CD4-positive, alpha-beta memory T cell (primary cell): ENCODE measurements at regions of chr17 and their contacts with region 1.

Region 1: GRCh38 chr17:57084802-57085447 is at the start of gene AKAP1:
- DNase-seq: peak; percentile 93 to 98 (median 98)
- H3K4me3 ChIP-seq: peak within 1 kb of the TSS; percentile 72 to 99
- H3K4me3 Mint-ChIP-seq: peak within 1 kb of the TSS; percentile 91 to 95 (median 92)
- H3K27ac ChIP-seq: peak within 1 kb of the TSS; percentile 83
- H3K27ac Mint-ChIP-seq: peak within 1 kb of the TSS; percentile 93 to 98 (median 95)
- H3K4me1 ChIP-seq: peaks cover 18% of the 10 kb centered on the region
- H3K4me1 Mint-ChIP-seq: peaks cover 22 to 35% (median 27%) of the 10 kb centered on the region in 4 donors
- H3K27me3 ChIP-seq: no peaks in the 10 kb centered on the region
- H3K27me3 Mint-ChIP-seq: no peaks in the 10 kb centered on the region
- total RNA-seq, gene AKAP1: 33.0 to 35.7 TPM

Region 2: DNA sequence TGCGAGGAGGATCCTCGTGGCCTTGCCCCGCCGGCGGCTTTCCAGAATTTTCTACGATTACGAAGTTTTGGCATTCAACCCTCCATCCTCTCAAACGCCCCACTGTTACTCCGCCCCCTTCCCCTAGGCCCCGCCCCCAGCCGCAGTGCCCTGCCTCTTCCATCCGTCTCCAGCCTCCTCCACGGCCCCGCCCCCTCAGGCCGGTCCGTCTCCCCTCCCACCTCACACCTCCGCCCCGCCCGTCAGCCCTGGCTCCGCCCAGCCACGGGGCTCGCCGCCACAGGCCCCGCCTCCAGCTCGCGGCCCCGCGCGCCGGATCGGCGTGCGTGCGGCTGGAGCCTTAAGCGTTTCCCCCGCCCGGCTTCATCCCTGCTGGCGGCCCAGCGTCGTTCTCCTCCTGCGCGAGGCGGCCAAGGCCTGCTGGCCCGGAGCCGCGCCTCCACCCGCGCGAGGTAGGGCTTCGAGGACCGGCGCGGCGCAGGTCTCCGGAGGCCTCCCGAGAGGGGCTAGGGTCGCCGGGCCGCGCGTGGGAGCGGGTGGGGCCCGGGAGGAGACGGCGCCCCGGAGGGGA is 251.0 kb before region 1 on chr17 and contains the starts of genes C17orf67 and DGKE:
- CTCF ChIA-PET with region 1: no interaction called
- POLR2A ChIA-PET with region 1: interaction called, 31 read pairs
- intact Hi-C with region 1: loop called (anchors 1 kb)
- DNase-seq: peak; percentile 98 to 99 (median 98)
- H3K4me3 ChIP-seq: peak within 1 kb of the TSS; percentile 49 to 88
- H3K4me3 Mint-ChIP-seq: peak within 1 kb of the TSS; percentile 95 to 98 (median 96)
- H3K27ac ChIP-seq: peak within 1 kb of the TSS; percentile 79
- H3K27ac Mint-ChIP-seq: peak within 1 kb of the TSS; percentile 92 to 97 (median 95)
- H3K4me1 ChIP-seq: peaks cover 67% of the 10 kb centered on the region
- H3K4me1 Mint-ChIP-seq: peaks cover 43 to 75% (median 57%) of the 10 kb centered on the region in 4 donors
- H3K27me3 ChIP-seq: no peaks in the 10 kb centered on the region
- H3K27me3 Mint-ChIP-seq: no peaks in the 10 kb centered on the region
- total RNA-seq, gene C17orf67: 9.5 to 11.2 TPM
- total RNA-seq, gene DGKE: 36.7 to 37.7 TPM

Region 3: DNA sequence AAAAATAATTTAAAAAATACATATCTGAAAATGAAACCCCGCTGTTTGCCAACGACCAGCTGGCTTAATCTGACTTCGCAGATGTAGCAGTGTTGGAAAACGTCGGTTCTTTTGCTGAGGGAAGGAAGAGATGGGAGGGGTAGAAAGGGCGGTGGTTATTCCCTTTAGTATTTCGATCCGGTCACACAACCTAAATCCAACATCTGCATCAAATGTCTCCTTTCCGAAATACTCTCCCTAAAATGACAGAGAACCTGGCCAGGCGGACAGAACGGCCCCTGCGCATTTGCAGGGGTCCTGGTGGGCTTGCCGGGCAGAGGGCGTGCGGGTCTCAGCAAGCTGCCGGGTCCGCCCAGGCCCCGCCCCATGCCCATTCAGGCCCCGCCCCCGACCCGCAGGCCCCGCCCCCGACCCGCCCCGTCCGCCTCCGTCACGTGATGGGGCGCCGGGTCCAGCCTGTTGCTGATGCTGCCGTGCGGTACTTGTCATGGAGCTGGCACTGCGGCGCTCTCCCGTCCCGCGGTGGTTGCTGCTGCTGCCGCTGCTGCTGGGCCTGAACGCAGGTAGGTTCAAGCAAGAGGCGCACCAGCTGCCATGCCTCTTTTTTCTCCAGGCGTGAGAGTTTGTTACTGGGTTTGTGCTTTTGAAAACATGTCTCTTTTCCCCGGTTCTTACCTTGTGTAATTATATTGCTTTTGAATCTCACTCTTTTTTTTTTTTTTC is 107.1 kb before region 1 on chr17 and contains the start of gene SCPEP1:
- CTCF ChIA-PET with region 1: no interaction called
- POLR2A ChIA-PET with region 1: interaction called, 4 read pairs
- intact Hi-C with region 1: loop called (anchors 5 kb)
- DNase-seq: peak; percentile 77 to 87 (median 80)
- H3K4me3 ChIP-seq: peak within 1 kb of the TSS; percentile 46 to 68
- H3K4me3 Mint-ChIP-seq: peak within 1 kb of the TSS; percentile 90 to 94 (median 91)
- H3K27ac ChIP-seq: peak within 1 kb of the TSS; percentile 32
- H3K27ac Mint-ChIP-seq: peak within 1 kb of the TSS; percentile 81 to 96 (median 90)
- H3K4me1 ChIP-seq: peaks cover 19% of the 10 kb centered on the region
- H3K4me1 Mint-ChIP-seq: peaks cover 11 to 28% (median 19%) of the 10 kb centered on the region in 4 donors
- H3K27me3 ChIP-seq: no peaks in the 10 kb centered on the region
- H3K27me3 Mint-ChIP-seq: peaks cover 1 to 4% of the 10 kb centered on the region in 2 donors
- total RNA-seq, gene SCPEP1: 16.3 to 19.4 TPM

Region 4: GRCh38 chr17:56994009-56994792 is 90.7 kb before region 1 on chr17:
- CTCF ChIA-PET with region 1: no interaction called
- POLR2A ChIA-PET with region 1: no interaction called
- intact Hi-C with region 1: no loop called
- DNase-seq: no peak
- H3K4me3 ChIP-seq: no peak overlapping the region
- H3K4me3 Mint-ChIP-seq: no peak overlapping the region
- H3K27ac ChIP-seq: no peak overlapping the region
- H3K27ac Mint-ChIP-seq: no peak overlapping the region
- H3K4me1 ChIP-seq: no peaks in the 10 kb centered on the region
- H3K4me1 Mint-ChIP-seq: no peaks in the 10 kb centered on the region
- H3K27me3 ChIP-seq: no peaks in the 10 kb centered on the region
- H3K27me3 Mint-ChIP-seq: no peaks in the 10 kb centered on the region

Region 5: DNA sequence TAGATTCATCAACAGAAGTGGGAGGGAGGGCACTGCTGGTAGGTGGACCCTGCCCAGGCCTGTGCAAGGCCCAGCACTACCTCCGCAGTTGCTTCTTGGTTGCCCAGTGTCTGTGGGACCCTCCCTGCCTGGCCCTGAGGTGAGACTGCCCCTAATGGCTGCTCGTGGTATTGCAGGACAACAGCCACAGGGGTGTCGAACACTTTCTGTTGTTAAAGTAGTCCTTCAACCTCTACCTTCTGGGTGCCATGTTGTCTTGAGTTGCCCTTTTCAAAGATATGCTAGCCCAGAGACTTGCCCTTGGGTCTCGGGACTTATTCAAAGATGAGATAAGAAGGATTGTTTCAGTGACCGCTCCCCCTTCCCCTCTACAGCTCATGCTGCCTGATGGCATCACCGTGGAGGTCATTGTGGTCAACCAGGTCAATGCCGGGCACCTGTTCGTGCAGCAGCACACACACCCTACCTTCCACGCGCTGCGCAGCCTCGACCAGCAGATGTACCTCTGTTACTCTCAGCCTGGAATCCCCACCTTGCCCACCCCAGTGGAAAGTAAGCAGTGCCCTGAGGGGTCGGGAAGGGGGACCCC is 29.3 kb after region 1 on chr17:
- CTCF ChIA-PET with region 1: interaction called, 3 read pairs
- POLR2A ChIA-PET with region 1: interaction called, 5 read pairs
- intact Hi-C with region 1: loop called (anchors 2 kb)
- DNase-seq: peak; percentile 31 to 50 (median 43)
- H3K4me3 ChIP-seq: no peak overlapping the region
- H3K4me3 Mint-ChIP-seq: no peak overlapping the region
- H3K27ac ChIP-seq: no peak overlapping the region
- H3K27ac Mint-ChIP-seq: peak overlapping the region in 2 of 7 donors; percentile 29 to 37
- H3K4me1 ChIP-seq: peaks cover 3% of the 10 kb centered on the region
- H3K4me1 Mint-ChIP-seq: peaks cover 0 to 1% (median 0%) of the 10 kb centered on the region in 4 donors
- H3K27me3 ChIP-seq: no peaks in the 10 kb centered on the region
- H3K27me3 Mint-ChIP-seq: no peaks in the 10 kb centered on the region

Region 6: GRCh38 chr17:57849874-57850754 is 765.2 kb after region 1 on chr17 and contains the start of gene MRPS23:
- CTCF ChIA-PET with region 1: no interaction called
- POLR2A ChIA-PET with region 1: interaction called, 7 read pairs
- intact Hi-C with region 1: loop called (anchors 1 kb)
- DNase-seq: peak; percentile 94 to 99 (median 97)
- H3K4me3 ChIP-seq: peak within 1 kb of the TSS; percentile 75 to 87
- H3K4me3 Mint-ChIP-seq: peak within 1 kb of the TSS; percentile 96 to 99 (median 98)
- H3K27ac ChIP-seq: peak within 1 kb of the TSS; percentile 92
- H3K27ac Mint-ChIP-seq: peak within 1 kb of the TSS; percentile 98 to 100 (median 99)
- H3K4me1 ChIP-seq: peaks cover 32% of the 10 kb centered on the region
- H3K4me1 Mint-ChIP-seq: peaks cover 27 to 57% (median 35%) of the 10 kb centered on the region in 4 donors
- H3K27me3 ChIP-seq: no peaks in the 10 kb centered on the region
- H3K27me3 Mint-ChIP-seq: no peaks in the 10 kb centered on the region
- total RNA-seq, gene MRPS23: 28.7 to 29.5 TPM

Region 7: GRCh38 chr17:58352014-58352842 is 1267.3 kb after region 1 on chr17 and contains the start of gene SUPT4H1:
- CTCF ChIA-PET with region 1: no interaction called
- POLR2A ChIA-PET with region 1: no interaction called
- intact Hi-C with region 1: loop called (anchors 5 kb)
- DNase-seq: peak; percentile 91 to 94 (median 94)
- H3K4me3 ChIP-seq: peak within 1 kb of the TSS; percentile 92 to 98
- H3K4me3 Mint-ChIP-seq: peak within 1 kb of the TSS; percentile 99 to 100 (median 99)
- H3K27ac ChIP-seq: peak within 1 kb of the TSS; percentile 85
- H3K27ac Mint-ChIP-seq: peak within 1 kb of the TSS; percentile 98 to 100 (median 99)
- H3K4me1 ChIP-seq: peaks cover 57% of the 10 kb centered on the region
- H3K4me1 Mint-ChIP-seq: peaks cover 37 to 65% (median 52%) of the 10 kb centered on the region in 4 donors
- H3K27me3 ChIP-seq: no peaks in the 10 kb centered on the region
- H3K27me3 Mint-ChIP-seq: no peaks in the 10 kb centered on the region
- total RNA-seq, gene SUPT4H1: 61.4 to 75.2 TPM